Common myeloid progenitor, CD34-positive (primary cell): ENCODE measurements at regions of chr9 and their contacts with region 1.

Region 1: DNA sequence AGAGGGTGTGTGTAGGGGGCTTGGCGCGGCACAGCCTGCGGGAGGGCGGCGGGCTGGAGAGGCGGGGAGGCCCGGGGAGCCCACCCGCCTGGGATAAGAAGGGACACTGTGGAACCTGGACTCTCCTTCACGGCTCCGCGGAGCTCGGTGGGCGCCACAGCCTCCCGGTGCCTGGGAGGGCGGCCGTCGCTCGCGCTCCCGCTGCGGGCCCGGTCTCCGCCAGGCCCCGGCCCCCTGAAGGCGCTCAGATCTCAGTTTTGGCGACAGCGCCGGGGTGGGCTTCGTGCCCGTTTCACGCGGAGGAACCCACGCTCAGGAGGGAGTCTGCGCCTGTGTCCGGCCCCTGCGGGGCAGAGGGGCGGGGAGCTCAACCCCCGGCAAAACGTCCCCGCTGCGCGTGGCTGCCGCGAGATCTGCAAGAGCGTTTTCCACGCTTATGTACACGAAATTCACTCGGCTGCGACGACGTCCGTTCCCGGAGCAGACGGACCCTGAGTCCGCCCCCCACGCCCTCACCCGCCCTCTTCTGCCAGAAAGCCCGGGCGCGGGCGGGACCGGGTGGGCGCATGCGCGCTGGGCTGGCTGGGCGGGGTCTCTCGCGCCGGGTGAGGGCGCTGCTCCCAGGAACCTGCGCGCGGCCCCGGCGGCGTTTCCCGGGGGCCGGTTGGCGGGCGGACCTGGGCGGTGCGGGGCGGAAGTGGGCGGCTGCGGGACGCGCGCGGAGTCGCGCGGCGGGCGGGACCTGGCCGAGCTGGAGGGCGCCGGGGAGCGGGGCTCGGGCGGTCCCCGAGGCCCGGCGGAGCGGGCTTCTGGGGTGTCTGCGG is at the start of gene NELFB:
- DNase-seq: peak; percentile 81 to 84 (median 83)
- H3K4me3 ChIP-seq: peak within 1 kb of the TSS; percentile 72 to 94 (median 88)
- H3K27ac ChIP-seq: peak within 1 kb of the TSS; percentile 15 to 76
- H3K4me1 ChIP-seq: peaks cover 0 to 27% (median 25%) of the 10 kb centered on the region in 4 experiments
- H3K27me3 ChIP-seq: no peaks in the 10 kb centered on the region

Region 2: GRCh38 chr9:137240861-137241489 is 13.9 kb before region 1 on chr9 and contains the start of gene TUBB4B:
- CTCF ChIA-PET with region 1: interaction called, 11 read pairs
- POLR2A ChIA-PET with region 1: interaction called, 14 read pairs
- DNase-seq: peak; percentile 100
- H3K4me3 ChIP-seq: peak within 1 kb of the TSS; percentile 56 to 87 (median 78)
- H3K27ac ChIP-seq: peak within 1 kb of the TSS; percentile 33 to 83
- H3K4me1 ChIP-seq: peaks cover 3 to 65% (median 53%) of the 10 kb centered on the region in 4 experiments
- H3K27me3 ChIP-seq: no peaks in the 10 kb centered on the region

Region 3: DNA sequence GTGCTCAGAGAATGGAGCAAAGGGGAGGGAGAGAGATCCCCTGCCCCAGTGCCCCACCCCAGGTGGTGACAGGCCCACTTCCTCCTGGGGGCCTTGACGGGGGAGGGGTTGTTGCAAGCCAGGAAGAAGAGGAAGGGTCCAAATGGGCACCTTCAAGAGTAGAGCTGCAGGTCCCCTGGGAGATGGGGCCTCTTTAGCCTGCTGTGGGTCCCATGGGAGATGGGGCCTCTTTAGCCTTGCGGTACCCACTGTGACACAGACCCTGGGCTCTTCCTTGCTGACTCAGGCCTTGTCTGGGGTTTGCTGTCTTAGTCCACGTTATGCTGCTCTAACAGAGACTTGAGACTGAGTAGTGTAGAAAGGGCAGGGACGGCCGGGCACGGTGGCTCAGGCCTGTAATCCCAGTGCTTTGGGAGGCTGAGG is 13.1 kb after region 1 on chr9:
- CTCF ChIA-PET with region 1: interaction called, 12 read pairs
- POLR2A ChIA-PET with region 1: no interaction called
- DNase-seq: no peak
- H3K4me3 ChIP-seq: no peak overlapping the region
- H3K27ac ChIP-seq: no peak overlapping the region
- H3K4me1 ChIP-seq: peaks cover 0 to 40% (median 38%) of the 10 kb centered on the region in 4 experiments
- H3K27me3 ChIP-seq: no peaks in the 10 kb centered on the region